Right cardiac atrium (tissue), 5 donors: ENCODE measurements at regions of chr4 and their contacts with region 1.

Region 1: DNA sequence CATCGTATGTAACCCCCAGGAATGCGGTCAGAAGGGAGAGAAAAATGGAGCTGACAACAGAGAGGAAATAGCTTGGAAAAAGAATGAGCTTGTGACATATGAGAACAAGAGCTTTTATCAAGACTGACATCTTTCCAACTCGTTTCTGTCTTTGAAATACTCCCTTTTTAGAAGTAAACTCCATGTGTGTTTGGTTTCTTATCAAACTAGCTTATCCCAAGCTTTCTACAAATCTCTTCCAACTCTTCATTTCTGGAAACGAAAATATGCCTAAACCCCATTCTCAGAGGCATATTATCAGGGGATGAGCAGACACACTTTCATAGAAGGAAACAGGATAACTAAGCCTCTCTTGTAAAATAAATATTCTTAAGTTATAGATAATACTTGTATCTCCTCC is 235.4 kb downstream of the NAF1 start:
- DNase-seq: no peak
- ATAC-seq: no peak
- H3K4me3 ChIP-seq: no peak overlapping the region
- H3K27ac ChIP-seq: no peak overlapping the region
- H3K4me1 ChIP-seq: no peaks in the 10 kb centered on the region
- H3K27me3 ChIP-seq: no peaks in the 10 kb centered on the region

Region 2: DNA sequence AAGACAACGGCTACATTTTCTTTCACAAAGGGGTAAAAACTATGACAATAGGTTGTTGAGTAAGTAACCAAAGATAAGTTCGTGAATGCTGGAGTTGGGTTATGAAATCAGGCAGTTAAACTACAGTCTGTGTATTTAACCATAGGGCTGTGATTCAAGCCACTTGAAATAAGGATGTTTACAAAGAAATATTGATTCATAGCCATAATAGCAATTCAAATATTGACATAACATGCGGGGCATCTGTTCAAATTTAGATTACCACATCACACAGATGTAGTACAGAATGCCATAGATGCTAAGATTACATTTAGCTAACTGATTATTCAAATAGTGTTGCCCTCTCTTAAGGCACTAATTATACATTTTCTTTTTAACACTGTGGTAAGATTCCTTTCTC is 1131.6 kb before region 1 on chr4:
- intact Hi-C with region 1: no loop called
- DNase-seq: no peak
- ATAC-seq: no peak
- H3K4me3 ChIP-seq: no peak overlapping the region
- H3K27ac ChIP-seq: no peak overlapping the region
- H3K4me1 ChIP-seq: no peaks in the 10 kb centered on the region
- H3K27me3 ChIP-seq: no peaks in the 10 kb centered on the region

Region 3: GRCh38 chr4:162912482-162912881 is 18.8 kb before region 1 on chr4:
- intact Hi-C with region 1: loop called in 1 of 4 experiments (anchors 2 kb)
- DNase-seq: no peak
- ATAC-seq: no peak
- H3K4me3 ChIP-seq: no peak overlapping the region
- H3K27ac ChIP-seq: no peak overlapping the region
- H3K4me1 ChIP-seq: no peaks in the 10 kb centered on the region
- H3K27me3 ChIP-seq: no peaks in the 10 kb centered on the region

Region 4: DNA sequence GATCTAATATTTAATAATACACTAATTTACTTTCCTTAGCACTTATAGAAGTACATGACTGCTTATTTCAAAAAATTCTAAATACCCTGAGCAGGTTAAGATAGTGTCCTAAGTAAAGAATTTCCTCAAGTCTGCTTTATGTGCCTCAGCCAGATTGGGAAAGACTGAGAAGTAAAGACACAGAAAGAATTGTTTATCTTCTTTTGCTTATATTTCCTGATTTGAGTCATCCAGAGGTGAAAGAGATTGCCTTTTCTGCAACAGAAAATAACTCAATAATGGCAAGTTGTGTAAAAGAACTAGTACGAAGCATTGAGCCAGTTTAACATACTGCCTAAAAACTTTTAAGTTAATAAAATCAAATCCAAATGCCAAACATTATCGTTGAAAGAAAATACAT is 190.4 kb after region 1 on chr4:
- intact Hi-C with region 1: no loop called
- DNase-seq: no peak
- ATAC-seq: no peak
- H3K4me3 ChIP-seq: no peak overlapping the region
- H3K27ac ChIP-seq: no peak overlapping the region
- H3K4me1 ChIP-seq: no peaks in the 10 kb centered on the region
- H3K27me3 ChIP-seq: no peaks in the 10 kb centered on the region